Activated CD4-positive, alpha-beta memory T cell treated with anti-CD3 and anti-CD28 coated beads for 36 hours (primary cell): ENCODE measurements at regions of chr7 and their contacts with region 1.

Region 1: DNA sequence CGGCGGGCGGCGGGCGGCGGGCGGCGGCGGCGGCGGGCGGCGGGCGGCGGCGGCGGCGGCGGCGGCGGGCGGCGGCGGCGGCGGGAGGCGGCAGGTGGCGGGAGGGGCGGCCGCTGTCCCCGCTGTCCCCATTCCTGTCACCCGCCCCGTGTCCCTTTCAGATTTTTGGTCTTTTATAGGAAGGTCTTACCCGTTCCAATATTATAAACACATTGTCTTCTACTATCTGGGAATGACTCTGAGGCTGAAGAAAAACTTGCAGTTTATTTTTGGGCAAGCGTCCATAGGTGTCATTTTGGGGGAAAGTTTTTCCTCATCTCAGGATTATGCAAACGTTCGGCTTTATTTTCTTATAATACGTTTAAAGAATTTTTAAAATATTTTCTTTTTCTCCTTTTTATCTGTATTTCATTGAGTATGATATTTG is 578 bp downstream of the ZNF713 start:
- DNase-seq: no peak
- H3K4me3 Mint-ChIP-seq: peak overlapping the region; percentile 76
- H3K27ac Mint-ChIP-seq: peak overlapping the region; percentile 74
- H3K4me1 Mint-ChIP-seq: peaks cover 4% of the 10 kb centered on the region
- H3K27me3 Mint-ChIP-seq: no peaks in the 10 kb centered on the region

Region 2: GRCh38 chr7:55641273-55641691 is 246.6 kb before region 1 on chr7:
- CTCF ChIA-PET with region 1: interaction called, 3 read pairs
- POLR2A ChIA-PET with region 1: no interaction called
- intact Hi-C with region 1: loop called (anchors 1 kb)
- DNase-seq: peak; percentile 32
- H3K4me3 Mint-ChIP-seq: no peak overlapping the region
- H3K27ac Mint-ChIP-seq: peak overlapping the region; percentile 9
- H3K4me1 Mint-ChIP-seq: peaks cover 9% of the 10 kb centered on the region
- H3K27me3 Mint-ChIP-seq: peaks cover 1% of the 10 kb centered on the region

Region 3: GRCh38 chr7:55951637-55952351 is 64.0 kb after region 1 on chr7 and contains the start of gene MRPS17:
- CTCF ChIA-PET with region 1: no interaction called
- POLR2A ChIA-PET with region 1: no interaction called
- intact Hi-C with region 1: loop called (anchors 1 kb)
- DNase-seq: peak; percentile 96
- H3K4me3 Mint-ChIP-seq: peak within 1 kb of the TSS; percentile 86
- H3K27ac Mint-ChIP-seq: peak within 1 kb of the TSS; percentile 85
- H3K4me1 Mint-ChIP-seq: peaks cover 20% of the 10 kb centered on the region
- H3K27me3 Mint-ChIP-seq: peaks cover 3% of the 10 kb centered on the region
- total RNA-seq, gene MRPS17: 21.7 to 22.3 TPM

Region 4: GRCh38 chr7:55964261-55965099 is 76.6 kb after region 1 on chr7 and contains the start of gene NIPSNAP2:
- CTCF ChIA-PET with region 1: no interaction called
- POLR2A ChIA-PET with region 1: no interaction called
- intact Hi-C with region 1: loop called (anchors 1 kb)
- DNase-seq: peak; percentile 67
- H3K4me3 Mint-ChIP-seq: peak within 1 kb of the TSS; percentile 84
- H3K27ac Mint-ChIP-seq: peak within 1 kb of the TSS; percentile 85
- H3K4me1 Mint-ChIP-seq: peaks cover 32% of the 10 kb centered on the region
- H3K27me3 Mint-ChIP-seq: no peaks in the 10 kb centered on the region
- total RNA-seq, gene NIPSNAP2: 55.7 to 57.4 TPM

Region 5: GRCh38 chr7:56106108-56107073 is 218.6 kb after region 1 on chr7 and contains the start of gene CHCHD2:
- CTCF ChIA-PET with region 1: no interaction called
- POLR2A ChIA-PET with region 1: no interaction called
- intact Hi-C with region 1: loop called (anchors 1 kb)
- DNase-seq: peak; percentile 97
- H3K4me3 Mint-ChIP-seq: peak within 1 kb of the TSS; percentile 97
- H3K27ac Mint-ChIP-seq: peak within 1 kb of the TSS; percentile 94
- H3K4me1 Mint-ChIP-seq: peaks cover 30% of the 10 kb centered on the region
- H3K27me3 Mint-ChIP-seq: no peaks in the 10 kb centered on the region
- total RNA-seq, gene CHCHD2: 764 to 766 TPM